ENCODE measurements at regions of chr5 and their contacts with region 1.

Region 1: DNA sequence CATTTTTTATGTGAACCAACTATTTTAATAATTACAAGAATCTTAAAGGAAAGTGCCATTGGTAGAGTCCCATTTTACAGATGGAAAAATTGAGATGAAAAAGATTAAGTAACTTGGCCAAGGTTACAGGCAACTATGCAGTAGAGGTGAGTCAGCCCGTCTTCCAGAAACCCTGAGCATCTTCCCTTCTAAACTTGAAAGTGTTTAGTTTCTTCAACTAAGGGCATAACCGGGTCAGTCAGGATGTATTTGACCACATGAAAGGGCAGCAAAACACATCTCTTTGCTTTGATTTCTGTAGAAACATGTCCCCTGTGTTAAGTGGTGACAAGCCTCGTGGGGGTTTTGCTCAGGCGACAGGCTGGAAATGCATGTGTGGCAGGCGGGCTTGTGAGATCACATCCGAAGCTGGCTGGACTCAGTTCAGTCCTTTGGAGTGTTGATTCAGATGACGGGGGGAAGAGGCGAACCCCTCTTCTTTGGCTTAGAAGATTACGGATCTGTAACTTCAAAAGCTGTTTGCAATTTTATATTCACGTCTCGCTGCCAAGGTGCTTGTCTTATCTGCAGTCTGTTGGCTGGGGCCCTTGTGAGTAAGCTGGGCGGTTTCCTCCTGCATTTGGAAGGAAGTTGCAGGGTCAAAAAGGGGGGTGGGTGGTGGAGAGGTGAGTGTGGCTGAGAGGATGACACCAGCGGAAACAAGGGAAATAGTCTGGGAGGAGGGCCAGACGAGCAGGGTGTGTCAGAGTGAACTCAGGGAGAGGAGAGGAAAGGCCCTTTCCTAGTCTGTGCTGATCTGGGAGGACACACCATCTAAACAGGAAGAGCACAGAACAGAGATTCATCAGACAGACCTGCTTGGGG is 78.9 kb upstream of the RPS23 start:
- DNase-seq: peak; percentile 79 to 82
- H3K4me3 ChIP-seq: peak overlapping the region; percentile 26; the same call in 1 of the 2 replicates
- H3K27ac ChIP-seq: peak overlapping the region; percentile 80
- H3K4me1 ChIP-seq: peaks cover 6% of the 10 kb centered on the region
- H3K27me3 ChIP-seq: no peaks in the 10 kb centered on the region
- CTCF ChIP-seq: no peak

Region 2: DNA sequence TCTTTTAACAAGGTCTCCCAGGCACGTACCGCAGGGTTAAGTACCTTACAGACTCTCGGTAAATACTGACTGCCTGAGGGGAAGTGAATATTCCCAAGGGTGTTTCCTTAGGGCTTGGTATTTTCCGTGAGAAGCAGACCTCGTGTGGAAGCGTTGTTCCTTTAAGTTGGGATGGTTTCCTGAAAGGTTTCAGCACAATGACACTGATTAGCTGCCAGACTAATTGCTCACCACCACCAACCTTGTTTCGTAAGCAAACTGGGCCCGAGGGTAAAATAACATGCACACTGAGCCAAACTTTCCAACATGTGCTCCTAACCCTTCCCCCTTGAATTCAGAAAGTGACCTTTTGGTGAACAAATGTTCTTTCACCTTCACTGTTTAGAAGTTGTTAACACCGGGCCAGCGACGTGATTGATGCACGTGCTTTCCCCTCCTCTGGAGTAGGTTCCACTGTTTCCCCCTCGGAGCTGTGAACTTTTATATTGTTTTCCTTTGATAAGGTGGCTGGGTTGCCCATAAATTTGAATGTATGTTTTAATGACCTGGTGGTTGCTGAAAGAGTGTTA is 49.2 kb after region 1 on chr5:
- CTCF ChIA-PET with region 1: no interaction called
- POLR2A ChIA-PET with region 1: no interaction called
- intact Hi-C with region 1: loop called (anchors 2 kb)
- DNase-seq: peak; percentile 53 to 94
- H3K4me3 ChIP-seq: peak overlapping the region; percentile 35; the same call in 1 of the 2 replicates
- H3K27ac ChIP-seq: peak overlapping the region; percentile 99
- H3K4me1 ChIP-seq: peaks cover 33% of the 10 kb centered on the region
- H3K27me3 ChIP-seq: no peaks in the 10 kb centered on the region
- CTCF ChIP-seq: no peak

Region 3: GRCh38 chr5:82931110-82931509 is 574.1 kb after region 1 on chr5:
- CTCF ChIA-PET with region 1: no interaction called
- POLR2A ChIA-PET with region 1: interaction called, 13 read pairs
- intact Hi-C with region 1: no loop called
- DNase-seq: no peak
- H3K4me3 ChIP-seq: no peak overlapping the region
- H3K27ac ChIP-seq: peak overlapping the region; percentile 39; the same call in 1 of the 2 replicates
- H3K4me1 ChIP-seq: peaks cover 13% of the 10 kb centered on the region; the same call in 1 of the 2 replicates
- H3K27me3 ChIP-seq: no peaks in the 10 kb centered on the region
- CTCF ChIP-seq: no peak

Region 4: GRCh38 chr5:83473346-83474163 is 1116.5 kb after region 1 on chr5:
- CTCF ChIA-PET with region 1: no interaction called
- POLR2A ChIA-PET with region 1: no interaction called
- intact Hi-C with region 1: loop called (anchors 2 kb)
- DNase-seq: peak; percentile 40 to 75
- H3K4me3 ChIP-seq: peak overlapping the region; percentile 63
- H3K27ac ChIP-seq: no peak overlapping the region
- H3K4me1 ChIP-seq: peaks cover 7% of the 10 kb centered on the region
- H3K27me3 ChIP-seq: peaks cover 14% of the 10 kb centered on the region; the same call in 1 of the 2 replicates
- CTCF ChIP-seq: peak; percentile 81

Region 5: DNA sequence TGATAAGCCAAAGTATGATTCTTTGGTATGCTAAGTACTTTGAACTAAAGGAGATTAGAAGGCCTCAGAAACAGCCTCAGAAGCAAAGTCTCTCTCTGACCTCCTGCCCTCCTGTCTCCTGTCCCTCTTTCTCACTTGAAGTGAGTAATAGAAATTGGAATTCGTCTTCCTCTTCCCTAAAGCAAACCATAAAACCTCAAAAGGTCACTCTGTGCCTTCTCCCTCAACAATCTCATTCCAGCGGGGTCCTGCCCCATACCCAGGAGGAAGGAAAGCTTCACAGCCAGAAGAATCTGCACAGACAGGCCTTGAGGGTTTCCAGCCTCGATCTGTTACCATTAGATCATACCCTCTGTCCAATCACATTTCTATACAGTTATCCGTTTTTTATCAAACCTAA is 1275.8 kb after region 1 on chr5:
- CTCF ChIA-PET with region 1: no interaction called
- POLR2A ChIA-PET with region 1: no interaction called
- intact Hi-C with region 1: loop called (anchors 1 kb)
- DNase-seq: peak; percentile 74 to 85
- H3K4me3 ChIP-seq: no peak overlapping the region
- H3K27ac ChIP-seq: peak overlapping the region; percentile 31; the same call in 1 of the 2 replicates
- H3K4me1 ChIP-seq: peaks cover 12% of the 10 kb centered on the region
- H3K27me3 ChIP-seq: no peaks in the 10 kb centered on the region
- CTCF ChIP-seq: no peak

Measured in PC-9 (cell line).